Heart left ventricle (tissue), 16 donors: ENCODE measurements at regions of chr2 and their contacts with region 1.

Region 1: GRCh38 chr2:100562732-100563720 is at the start of gene PDCL3:
- DNase-seq: peak; percentile 96 to 98 (median 98)
- ATAC-seq: peak; percentile 96 to 98 (median 97)
- H3K4me3 ChIP-seq: peak within 1 kb of the TSS; percentile 59 to 96 (median 76)
- H3K27ac ChIP-seq: peak within 1 kb of the TSS; percentile 70 to 97 (median 92)
- H3K4me1 ChIP-seq: peaks cover 0 to 26% (median 11%) of the 10 kb centered on the region in 12 donors
- H3K27me3 ChIP-seq: no peaks in the 10 kb centered on the region
- CTCF ChIP-seq: peak in 6 of 12 donors; percentile 11 to 57 (median 36)
- POLR2A ChIP-seq: peak in 1 of 2 donors; percentile 43
- total RNA-seq, gene PDCL3: 10.3 to 29.1 (median 23.4) TPM

Region 2: DNA sequence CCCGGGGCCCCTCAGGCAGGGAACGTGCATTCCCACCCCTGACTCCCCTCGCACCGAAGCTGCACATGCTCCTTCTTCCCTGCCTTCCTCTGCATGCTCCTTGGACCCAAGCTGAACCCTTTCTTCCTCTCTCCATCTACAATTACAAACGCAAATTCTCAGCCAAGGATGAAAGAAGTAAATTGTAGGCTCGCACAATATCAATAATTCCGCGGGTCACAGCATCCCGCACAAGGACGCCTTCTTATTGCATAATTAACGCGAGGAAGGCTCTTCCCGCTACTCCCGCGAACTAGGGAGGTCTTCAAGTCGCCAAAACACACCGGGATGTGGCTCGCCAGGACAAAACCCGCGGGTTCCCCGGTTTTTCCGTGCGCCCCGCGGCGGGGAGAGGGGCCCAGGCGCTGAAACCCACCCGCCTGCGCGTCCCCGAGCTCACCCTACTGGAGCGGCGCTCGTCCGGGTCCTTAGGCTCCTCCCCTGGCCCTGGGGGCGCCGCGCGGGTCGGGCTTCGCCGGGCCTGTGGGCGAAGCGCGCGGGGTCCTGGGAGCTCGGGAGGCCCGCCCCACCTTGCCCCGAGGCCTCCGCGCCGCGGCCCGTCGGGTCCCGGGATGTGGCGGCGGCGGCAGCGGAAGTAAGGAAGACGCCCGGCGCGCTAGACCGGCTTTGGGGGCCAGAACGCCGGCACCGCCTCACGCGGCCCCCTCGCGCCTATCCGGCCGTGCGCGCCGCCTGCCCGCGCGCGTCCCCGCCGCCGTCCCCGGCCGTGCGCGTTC is 145.9 kb before region 1 on chr2 and contains the start of gene CHST10:
- intact Hi-C with region 1: loop called in 7 of 10 experiments (anchors 5 to 10 kb)
- DNase-seq: peak; percentile 66 to 80 (median 75)
- ATAC-seq: peak; percentile 87 to 96 (median 94)
- H3K4me3 ChIP-seq: peak within 1 kb of the TSS; percentile 58 to 97 (median 78)
- H3K27ac ChIP-seq: peak within 1 kb of the TSS; percentile 47 to 89 (median 80)
- H3K4me1 ChIP-seq: peaks cover 0 to 22% (median 12%) of the 10 kb centered on the region in 12 donors
- H3K27me3 ChIP-seq: no peaks in the 10 kb centered on the region
- CTCF ChIP-seq: no peak
- POLR2A ChIP-seq: peak in 1 of 2 donors; percentile 45
- total RNA-seq, gene CHST10: 7.2 to 14.1 (median 9.8) TPM

Region 3: DNA sequence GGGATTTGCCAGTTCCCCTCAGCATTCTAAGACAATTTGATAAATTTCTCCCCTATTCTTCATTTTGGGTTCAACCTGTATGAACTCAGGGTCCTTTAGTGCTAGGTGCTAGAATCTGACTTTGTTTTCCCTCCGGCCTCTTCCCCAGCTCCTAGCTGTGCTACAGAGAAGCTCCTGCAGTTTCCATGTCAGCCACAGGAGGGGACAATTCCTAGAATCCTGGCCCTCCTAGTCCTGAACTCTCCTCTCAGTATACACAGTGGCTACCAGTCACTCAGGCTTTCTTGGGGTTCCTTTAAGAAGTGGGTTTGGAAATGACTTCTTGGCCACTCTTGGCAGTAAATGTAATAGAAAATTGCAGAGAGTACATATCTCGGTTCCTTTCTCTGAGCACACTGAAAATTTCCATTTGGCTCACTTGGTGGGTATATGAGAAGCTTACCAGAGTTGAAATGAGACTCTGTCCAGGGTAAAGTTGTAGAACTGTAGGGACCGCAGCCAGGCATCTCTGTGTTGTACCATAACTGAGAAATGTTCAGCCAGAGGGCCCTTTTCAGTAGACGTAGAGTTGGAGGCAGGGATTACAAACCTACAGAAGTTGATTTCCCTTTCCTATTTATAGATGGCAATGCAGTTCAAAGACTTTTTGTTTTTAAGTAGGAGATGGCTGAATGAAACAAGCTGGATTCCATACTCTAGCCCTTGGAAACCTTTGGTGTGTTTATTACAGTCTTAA is 140.5 kb before region 1 on chr2:
- intact Hi-C with region 1: loop called in 9 of 10 experiments (anchors 5 to 10 kb)
- DNase-seq: no peak
- ATAC-seq: peak in 3 of 4 donors; percentile 56 to 61 (median 58)
- H3K4me3 ChIP-seq: no peak overlapping the region
- H3K27ac ChIP-seq: no peak overlapping the region
- H3K4me1 ChIP-seq: peaks cover 0 to 6% (median 0%) of the 10 kb centered on the region in 12 donors
- H3K27me3 ChIP-seq: no peaks in the 10 kb centered on the region
- CTCF ChIP-seq: peak in 11 of 12 donors; percentile 24 to 59 (median 38)
- POLR2A ChIP-seq: no peak

Region 4: GRCh38 chr2:100427628-100428258 is 135.3 kb before region 1 on chr2:
- intact Hi-C with region 1: loop called in 4 of 10 experiments (anchors 5 to 10 kb)
- DNase-seq: peak in 4 of 5 donors; percentile 40 to 72 (median 48)
- ATAC-seq: peak in 3 of 4 donors; percentile 68 to 85 (median 84)
- H3K4me3 ChIP-seq: no peak overlapping the region
- H3K27ac ChIP-seq: no peak overlapping the region
- H3K4me1 ChIP-seq: peaks cover 0 to 6% (median 0%) of the 10 kb centered on the region in 12 donors
- H3K27me3 ChIP-seq: no peaks in the 10 kb centered on the region
- CTCF ChIP-seq: peak; percentile 23 to 63 (median 48)
- POLR2A ChIP-seq: no peak

Region 5: DNA sequence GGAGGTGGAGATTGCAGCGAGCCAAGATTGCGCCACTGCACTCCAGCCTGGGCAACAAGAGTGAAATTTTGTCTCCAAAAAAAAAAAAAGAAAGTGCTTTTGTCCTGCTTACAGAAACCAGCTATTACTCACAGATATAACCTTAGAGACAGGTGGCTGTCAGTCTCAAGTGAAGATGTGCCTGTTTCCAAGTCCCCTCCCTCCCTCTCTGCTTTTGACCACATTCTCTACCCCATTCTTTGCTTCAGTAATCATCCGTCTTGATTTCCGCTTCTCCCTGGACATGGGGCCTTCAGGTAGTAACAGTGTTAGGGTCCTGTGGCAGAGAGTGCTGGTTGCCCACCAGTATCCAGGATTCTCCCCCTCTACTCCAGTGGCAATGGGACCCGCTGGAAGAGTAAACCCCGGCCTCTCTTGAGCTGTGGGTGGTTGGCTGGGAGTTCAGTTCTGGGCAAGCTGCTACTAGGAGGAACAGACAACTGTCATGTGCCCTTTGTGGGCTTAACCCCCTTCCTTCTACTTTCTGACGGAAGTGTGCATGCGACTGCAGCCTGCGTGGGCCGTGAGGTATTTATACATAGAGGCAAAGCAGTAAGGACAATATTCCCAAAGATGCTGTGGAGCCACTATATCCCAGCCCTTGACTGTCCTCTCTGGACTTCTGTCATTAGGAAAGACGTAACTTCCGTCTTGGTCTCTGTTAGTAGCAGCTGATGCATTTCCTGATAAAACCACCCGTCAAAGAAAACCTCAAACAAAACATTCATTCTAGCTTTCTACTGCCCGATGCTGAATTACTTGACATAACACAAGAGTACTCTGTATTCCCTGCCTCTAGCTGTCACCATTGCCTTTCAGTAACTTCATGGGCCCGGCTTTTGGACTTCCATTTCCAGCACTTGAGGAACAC is 17.6 kb after region 1 on chr2:
- intact Hi-C with region 1: no loop called
- DNase-seq: peak in 1 of 5 donors; percentile 16
- ATAC-seq: peak; percentile 33 to 76 (median 52)
- H3K4me3 ChIP-seq: peak overlapping the region in 1 of 12 donors; percentile 4
- H3K27ac ChIP-seq: peak overlapping the region in 5 of 12 donors; percentile 16 to 92 (median 39)
- H3K4me1 ChIP-seq: peaks cover 0 to 18% (median 0%) of the 10 kb centered on the region in 12 donors
- H3K27me3 ChIP-seq: no peaks in the 10 kb centered on the region
- CTCF ChIP-seq: no peak
- POLR2A ChIP-seq: no peak